A549 (cell line): ENCODE measurements at regions of chr11 and their contacts with region 1.

Region 1: GRCh38 chr11:10623797-10624761 is 55.6 kb upstream of the LYVE1 start:
- DNase-seq: peak; percentile 46 to 57
- ATAC-seq: peak; percentile 48 to 84; a peak in 3 of 6 replicates
- H3K4me3 ChIP-seq: no peak overlapping the region
- H3K27ac ChIP-seq: peak overlapping the region in 1 of 2 experiments; percentile 52; a peak in 2 of 6 replicates
- H3K4me1 ChIP-seq: no peaks in the 10 kb centered on the region
- CTCF ChIP-seq: peak; percentile 56
- EP300 ChIP-seq: no peak
- POLR2A ChIP-seq: no peak
- RAD21 ChIP-seq: peak; percentile 79 to 82

Region 2: GRCh38 chr11:10072142-10072541 is 551.9 kb before region 1 on chr11:
- CTCF ChIA-PET with region 1: no interaction called
- POLR2A ChIA-PET with region 1: no interaction called
- DNase-seq: no peak
- ATAC-seq: no peak
- H3K4me3 ChIP-seq: no peak overlapping the region
- H3K27ac ChIP-seq: no peak overlapping the region
- H3K4me1 ChIP-seq: peaks cover 12% of the 10 kb centered on the region
- CTCF ChIP-seq: no peak
- EP300 ChIP-seq: no peak
- POLR2A ChIP-seq: no peak
- RAD21 ChIP-seq: no peak

Region 3: DNA sequence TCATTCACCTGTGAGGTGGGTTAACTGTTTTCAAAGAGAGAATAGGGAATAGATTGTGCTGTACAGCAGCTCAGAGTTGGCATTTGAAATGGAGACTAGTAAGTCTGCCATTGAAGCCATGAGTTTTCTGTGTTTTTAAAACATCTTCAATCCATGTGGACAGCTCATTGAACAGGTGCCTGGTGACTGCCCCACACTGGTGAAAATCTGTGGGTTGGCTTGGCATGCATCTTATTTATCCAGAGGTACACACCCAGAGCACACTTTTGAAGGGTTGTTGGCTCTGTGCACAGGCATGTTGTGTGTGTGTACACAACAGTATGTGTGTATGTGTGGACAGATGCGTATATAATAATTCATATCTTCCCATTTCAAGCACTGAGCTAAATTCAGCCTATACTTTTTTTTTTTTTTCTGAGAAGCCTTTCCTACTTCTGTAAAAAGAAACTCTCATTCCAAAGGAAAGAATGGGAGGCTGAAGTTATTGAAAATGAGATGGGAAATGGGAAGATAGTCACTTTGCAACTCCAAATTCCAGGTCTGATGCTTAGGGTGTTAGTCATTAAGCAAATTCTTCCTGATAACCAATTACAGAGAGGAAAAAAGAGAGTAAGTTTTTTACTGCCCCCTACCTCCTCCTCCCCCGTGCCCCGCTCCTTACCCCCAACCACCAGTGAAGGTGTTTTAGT is 48.6 kb before region 1 on chr11:
- CTCF ChIA-PET with region 1: no interaction called
- POLR2A ChIA-PET with region 1: no interaction called
- DNase-seq: no peak
- ATAC-seq: no peak
- H3K4me3 ChIP-seq: no peak overlapping the region
- H3K27ac ChIP-seq: no peak overlapping the region
- H3K4me1 ChIP-seq: no peaks in the 10 kb centered on the region
- CTCF ChIP-seq: no peak
- EP300 ChIP-seq: no peak
- POLR2A ChIP-seq: no peak
- RAD21 ChIP-seq: no peak

Region 4: GRCh38 chr11:10725114-10725906 is 101.2 kb after region 1 on chr11:
- CTCF ChIA-PET with region 1: interaction called, 21 read pairs
- POLR2A ChIA-PET with region 1: no interaction called
- DNase-seq: no peak
- ATAC-seq: no peak
- H3K4me3 ChIP-seq: no peak overlapping the region
- H3K27ac ChIP-seq: no peak overlapping the region
- H3K4me1 ChIP-seq: no peaks in the 10 kb centered on the region
- CTCF ChIP-seq: no peak
- EP300 ChIP-seq: no peak
- POLR2A ChIP-seq: no peak
- RAD21 ChIP-seq: no peak